ENCODE measurements at regions of chr16 and their contacts with region 1.

Region 1: GRCh38 chr16:66830422-66831404 is at the start of gene NAE1:
- DNase-seq: peak; percentile 92
- H3K4me3 Mint-ChIP-seq: peak within 1 kb of the TSS; percentile 75
- H3K27ac Mint-ChIP-seq: peak within 1 kb of the TSS; percentile 49
- H3K4me1 Mint-ChIP-seq: peaks cover 43% of the 10 kb centered on the region
- H3K27me3 Mint-ChIP-seq: no peaks in the 10 kb centered on the region
- total RNA-seq, gene NAE1: 121 to 126 TPM

Region 2: GRCh38 chr16:65961476-65962143 is 869.1 kb before region 1 on chr16:
- CTCF ChIA-PET with region 1: no interaction called
- POLR2A ChIA-PET with region 1: no interaction called
- intact Hi-C with region 1: no loop called
- DNase-seq: no peak
- H3K4me3 Mint-ChIP-seq: no peak overlapping the region
- H3K27ac Mint-ChIP-seq: no peak overlapping the region
- H3K4me1 Mint-ChIP-seq: no peaks in the 10 kb centered on the region
- H3K27me3 Mint-ChIP-seq: no peaks in the 10 kb centered on the region

Region 3: GRCh38 chr16:66751303-66751991 is 79.3 kb before region 1 on chr16 and contains the start of gene DYNC1LI2:
- CTCF ChIA-PET with region 1: interaction called, 14 read pairs
- POLR2A ChIA-PET with region 1: interaction called, 6 read pairs
- intact Hi-C with region 1: no loop called
- DNase-seq: peak; percentile 84
- H3K4me3 Mint-ChIP-seq: peak within 1 kb of the TSS; percentile 83
- H3K27ac Mint-ChIP-seq: peak within 1 kb of the TSS; percentile 74
- H3K4me1 Mint-ChIP-seq: peaks cover 37% of the 10 kb centered on the region
- H3K27me3 Mint-ChIP-seq: peaks cover 4% of the 10 kb centered on the region
- total RNA-seq, gene DYNC1LI2: 37.9 to 39.1 TPM

Region 4: GRCh38 chr16:66810391-66810790 is 20.3 kb before region 1 on chr16:
- CTCF ChIA-PET with region 1: interaction called, 11 read pairs
- POLR2A ChIA-PET with region 1: no interaction called
- intact Hi-C with region 1: no loop called
- DNase-seq: no peak
- H3K4me3 Mint-ChIP-seq: no peak overlapping the region
- H3K27ac Mint-ChIP-seq: no peak overlapping the region
- H3K4me1 Mint-ChIP-seq: no peaks in the 10 kb centered on the region
- H3K27me3 Mint-ChIP-seq: no peaks in the 10 kb centered on the region

Region 5: GRCh38 chr16:66858740-66859396 is 28.2 kb after region 1 on chr16:
- CTCF ChIA-PET with region 1: interaction called, 15 read pairs
- POLR2A ChIA-PET with region 1: no interaction called
- intact Hi-C with region 1: no loop called
- DNase-seq: no peak
- H3K4me3 Mint-ChIP-seq: no peak overlapping the region
- H3K27ac Mint-ChIP-seq: no peak overlapping the region
- H3K4me1 Mint-ChIP-seq: no peaks in the 10 kb centered on the region
- H3K27me3 Mint-ChIP-seq: no peaks in the 10 kb centered on the region

Region 6: DNA sequence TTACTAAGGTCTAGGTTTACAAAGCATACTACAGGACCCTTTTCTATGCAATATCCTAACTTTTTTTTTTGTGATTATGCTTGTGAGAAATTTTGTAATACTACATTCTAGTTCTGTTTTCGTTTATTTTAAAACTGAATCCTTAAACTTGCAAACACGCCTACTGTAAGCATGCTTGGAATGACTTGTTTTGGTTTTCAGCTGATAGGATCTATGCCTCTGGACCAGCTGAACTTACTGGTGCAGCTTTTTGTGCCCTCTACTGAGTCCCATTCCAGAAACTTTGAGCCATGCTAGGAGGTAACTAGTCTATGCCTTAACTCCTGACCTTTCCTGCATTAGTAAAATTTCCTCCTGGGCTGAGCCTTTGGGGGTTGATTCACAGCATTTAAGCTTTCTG is 55.6 kb after region 1 on chr16:
- CTCF ChIA-PET with region 1: interaction called, 41 read pairs
- POLR2A ChIA-PET with region 1: no interaction called
- intact Hi-C with region 1: no loop called
- DNase-seq: no peak
- H3K4me3 Mint-ChIP-seq: no peak overlapping the region
- H3K27ac Mint-ChIP-seq: no peak overlapping the region
- H3K4me1 Mint-ChIP-seq: peaks cover 48% of the 10 kb centered on the region
- H3K27me3 Mint-ChIP-seq: no peaks in the 10 kb centered on the region

Measured in activated CD4-positive, alpha-beta memory T cell treated with anti-CD3 and anti-CD28 coated beads for 36 hours (primary cell).